ENCODE measurements at regions of chr12 and their contacts with region 1.

Region 1: GRCh38 chr12:127861406-127861805 is 405.6 kb upstream of the TMEM132C start:
- DNase-seq: no peak
- ATAC-seq: no peak

Region 2: DNA sequence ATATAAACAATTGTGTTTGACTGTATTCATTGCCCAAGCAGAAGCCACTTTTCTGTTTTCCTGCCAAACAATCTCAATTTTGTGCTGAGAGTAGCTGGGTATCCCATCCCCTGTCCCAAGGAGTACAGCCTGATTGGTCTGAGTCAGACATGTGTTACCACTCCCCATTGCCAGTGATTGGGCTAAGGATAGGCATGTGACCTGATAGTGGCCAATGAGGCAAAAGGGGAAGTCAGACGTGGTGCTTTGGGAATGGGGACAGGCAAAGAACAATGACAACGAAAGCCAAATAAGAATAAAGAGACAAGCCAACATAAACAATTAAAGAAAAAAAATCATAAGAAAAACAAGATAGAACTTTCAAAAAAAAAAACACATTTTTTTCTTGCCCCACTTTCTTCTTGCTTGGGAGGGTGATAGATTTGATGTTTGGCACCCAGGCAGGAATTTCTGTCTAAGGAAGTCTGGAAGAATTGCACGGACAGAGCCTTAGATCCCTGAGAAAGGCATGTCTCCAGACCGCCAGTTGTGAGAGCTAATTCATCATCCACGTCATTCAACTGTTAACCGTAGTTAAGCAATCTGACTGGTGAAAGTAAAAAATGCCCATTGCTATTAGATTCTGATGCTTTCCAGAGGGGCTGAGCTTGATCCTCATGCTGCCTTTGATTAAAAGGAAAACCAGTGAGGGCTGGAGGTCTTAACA is 221.1 kb before region 1 on chr12:
- intact Hi-C with region 1: no loop called
- DNase-seq: no peak
- ATAC-seq: peak; percentile 55

Region 3: DNA sequence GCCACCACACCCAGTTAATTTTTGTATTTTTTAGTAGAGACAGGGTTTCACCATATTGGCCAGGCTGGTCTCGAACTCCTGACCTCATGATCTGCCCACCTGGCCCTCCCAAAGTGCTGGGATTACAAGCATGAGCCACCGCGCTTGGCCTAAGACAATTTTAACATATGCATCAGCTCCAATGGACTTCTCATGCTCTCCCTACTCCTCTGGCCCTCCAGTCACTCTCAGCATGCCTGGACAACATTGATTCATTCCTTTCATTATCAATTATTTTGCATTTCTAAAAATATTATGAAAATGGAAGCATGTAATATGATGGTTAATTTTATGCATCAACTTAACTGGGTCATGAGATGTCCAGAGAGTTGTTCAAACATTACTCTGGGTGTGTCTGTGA is 63.5 kb before region 1 on chr12:
- intact Hi-C with region 1: loop called (anchors 2 kb)
- DNase-seq: no peak
- ATAC-seq: no peak

Region 4: DNA sequence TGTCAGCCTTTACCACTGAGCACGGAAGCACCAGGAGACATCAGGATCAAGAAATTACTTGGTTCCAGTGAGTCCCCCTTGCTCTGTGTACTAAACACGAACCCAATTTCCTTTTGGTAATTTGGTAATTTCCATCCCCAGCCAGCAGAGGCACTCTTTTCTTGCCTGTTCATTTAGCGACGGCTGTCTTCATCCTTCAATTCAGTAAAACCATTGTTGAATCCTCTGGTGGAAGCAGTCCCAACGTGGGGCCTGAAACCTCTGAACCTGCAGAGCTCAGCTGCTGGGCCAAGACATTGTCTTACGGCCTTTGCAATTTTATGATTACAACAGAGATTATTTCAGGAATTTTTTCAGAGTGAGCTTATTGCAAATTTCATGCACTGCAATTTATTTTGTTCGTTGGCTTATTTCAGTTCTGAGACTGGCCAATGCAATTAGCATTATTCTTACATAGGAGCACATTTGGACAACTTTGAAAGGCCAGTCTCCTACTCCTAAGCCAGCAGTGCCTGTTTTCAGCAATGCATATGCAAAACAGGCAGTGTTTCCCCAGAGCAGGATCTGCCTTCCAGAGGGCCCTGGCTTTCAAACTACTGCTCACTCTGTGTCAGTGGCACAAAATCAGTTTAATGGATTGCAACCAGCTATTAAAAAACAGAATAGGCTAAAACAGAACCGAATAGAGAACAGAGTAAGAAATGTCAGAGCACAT is 32.6 kb after region 1 on chr12:
- intact Hi-C with region 1: loop called (anchors 1 kb)
- DNase-seq: no peak
- ATAC-seq: no peak

Measured in sciatic nerve (tissue), 2 donors.